Activated CD4-positive, alpha-beta T cell treated with anti-CD3 and anti-CD28 coated beads for 36 hours (primary cell): ENCODE measurements at regions of chr1 and their contacts with region 1.

Region 1: DNA sequence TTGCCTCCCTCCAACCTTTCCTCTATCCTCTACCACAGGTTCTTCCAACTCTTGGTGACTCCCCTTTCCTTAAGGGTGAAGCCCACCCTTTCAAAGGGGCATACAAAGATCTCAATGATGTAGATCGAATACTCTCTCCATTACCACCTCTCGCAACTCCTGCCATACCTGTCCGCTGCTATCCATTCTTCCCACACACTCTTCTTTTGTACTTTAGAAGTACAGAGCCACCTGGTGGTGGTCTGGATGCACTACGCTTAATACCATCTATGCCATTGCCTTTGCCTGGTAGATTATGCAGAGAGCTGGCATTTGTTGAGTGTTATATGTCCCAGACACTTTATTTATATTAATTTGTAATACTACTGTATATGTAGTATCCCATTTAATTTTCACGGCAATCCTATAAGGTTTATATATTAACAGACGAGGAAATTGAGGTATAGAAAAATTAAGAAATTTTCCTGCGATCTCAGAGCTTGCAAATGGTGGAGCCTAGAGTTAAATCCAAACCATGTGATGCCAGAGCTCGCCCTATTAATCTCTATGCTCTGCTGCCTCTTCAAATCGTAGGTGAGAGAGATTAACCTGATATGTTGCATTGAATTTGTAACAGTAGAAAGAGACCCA is 22.9 kb downstream of the TSHB start:
- DNase-seq: peak; percentile 70
- ATAC-seq: peak; percentile 80
- H3K4me3 Mint-ChIP-seq: no peak overlapping the region
- H3K27ac Mint-ChIP-seq: no peak overlapping the region
- H3K4me1 Mint-ChIP-seq: peaks cover 3% of the 10 kb centered on the region
- H3K27me3 Mint-ChIP-seq: no peaks in the 10 kb centered on the region

Region 2: DNA sequence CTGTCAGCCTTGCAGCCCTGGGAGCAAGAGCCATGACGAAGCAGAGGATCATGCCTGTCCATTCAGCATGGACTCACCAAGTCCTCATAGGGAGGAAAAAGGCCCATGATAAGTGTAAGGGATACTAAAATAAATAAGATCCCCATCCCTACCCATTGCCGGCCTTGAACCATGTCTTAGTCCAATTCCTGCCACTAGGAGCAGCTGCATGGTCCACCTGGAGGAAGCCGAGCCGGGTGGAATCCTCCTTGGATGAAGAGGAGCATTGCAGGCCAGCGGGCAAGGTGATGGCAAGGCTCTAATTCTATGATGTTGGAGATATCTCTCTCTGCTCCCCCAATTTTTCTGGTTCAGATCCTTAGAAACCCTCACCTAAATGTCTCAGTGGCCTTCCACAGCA is 860.2 kb before region 1 on chr1:
- CTCF ChIA-PET with region 1: no interaction called
- POLR2A ChIA-PET with region 1: no interaction called
- intact Hi-C with region 1: no loop called
- DNase-seq: no peak
- ATAC-seq: no peak
- H3K4me3 Mint-ChIP-seq: no peak overlapping the region
- H3K27ac Mint-ChIP-seq: no peak overlapping the region
- H3K4me1 Mint-ChIP-seq: peaks cover 3% of the 10 kb centered on the region
- H3K27me3 Mint-ChIP-seq: peaks cover 24% of the 10 kb centered on the region

Region 3: GRCh38 chr1:114716304-114717170 is 336.0 kb before region 1 on chr1 and contains the start of gene NRAS:
- CTCF ChIA-PET with region 1: no interaction called
- POLR2A ChIA-PET with region 1: no interaction called
- intact Hi-C with region 1: no loop called
- DNase-seq: peak; percentile 97
- ATAC-seq: peak; percentile 91
- H3K4me3 Mint-ChIP-seq: peak within 1 kb of the TSS; percentile 95
- H3K27ac Mint-ChIP-seq: peak within 1 kb of the TSS; percentile 97
- H3K4me1 Mint-ChIP-seq: peaks cover 30% of the 10 kb centered on the region
- H3K27me3 Mint-ChIP-seq: no peaks in the 10 kb centered on the region
- total RNA-seq, gene NRAS: 53.0 to 55.0 TPM

Region 4: GRCh38 chr1:114979278-114979891 is 73.2 kb before region 1 on chr1:
- CTCF ChIA-PET with region 1: interaction called, 7 read pairs
- POLR2A ChIA-PET with region 1: no interaction called
- intact Hi-C with region 1: loop called (anchors 1 kb)
- DNase-seq: peak; percentile 79
- ATAC-seq: no peak
- H3K4me3 Mint-ChIP-seq: no peak overlapping the region
- H3K27ac Mint-ChIP-seq: no peak overlapping the region
- H3K4me1 Mint-ChIP-seq: no peaks in the 10 kb centered on the region
- H3K27me3 Mint-ChIP-seq: peaks cover 9% of the 10 kb centered on the region

Region 5: DNA sequence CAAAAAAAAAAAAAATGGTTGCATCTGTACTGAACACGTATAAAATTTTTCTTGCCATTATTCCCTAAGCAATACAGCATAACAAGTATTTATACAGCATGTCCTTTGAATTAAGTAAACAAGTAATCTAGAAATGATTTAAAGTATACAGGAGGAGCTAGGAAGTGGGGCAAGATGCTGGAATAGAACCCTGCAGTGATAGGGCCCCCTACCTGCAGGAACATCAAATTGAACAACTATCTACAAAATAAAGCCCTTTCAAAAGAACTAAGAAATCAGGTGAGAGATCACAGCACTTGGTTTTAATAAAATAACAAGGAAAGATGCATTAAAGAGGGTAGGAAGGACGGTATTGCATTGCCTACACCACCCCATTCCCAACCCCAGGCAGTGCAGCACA is 12.1 kb before region 1 on chr1:
- CTCF ChIA-PET with region 1: interaction called, 15 read pairs
- POLR2A ChIA-PET with region 1: no interaction called
- intact Hi-C with region 1: no loop called
- DNase-seq: no peak
- ATAC-seq: no peak
- H3K4me3 Mint-ChIP-seq: no peak overlapping the region
- H3K27ac Mint-ChIP-seq: no peak overlapping the region
- H3K4me1 Mint-ChIP-seq: no peaks in the 10 kb centered on the region
- H3K27me3 Mint-ChIP-seq: no peaks in the 10 kb centered on the region

Region 6: DNA sequence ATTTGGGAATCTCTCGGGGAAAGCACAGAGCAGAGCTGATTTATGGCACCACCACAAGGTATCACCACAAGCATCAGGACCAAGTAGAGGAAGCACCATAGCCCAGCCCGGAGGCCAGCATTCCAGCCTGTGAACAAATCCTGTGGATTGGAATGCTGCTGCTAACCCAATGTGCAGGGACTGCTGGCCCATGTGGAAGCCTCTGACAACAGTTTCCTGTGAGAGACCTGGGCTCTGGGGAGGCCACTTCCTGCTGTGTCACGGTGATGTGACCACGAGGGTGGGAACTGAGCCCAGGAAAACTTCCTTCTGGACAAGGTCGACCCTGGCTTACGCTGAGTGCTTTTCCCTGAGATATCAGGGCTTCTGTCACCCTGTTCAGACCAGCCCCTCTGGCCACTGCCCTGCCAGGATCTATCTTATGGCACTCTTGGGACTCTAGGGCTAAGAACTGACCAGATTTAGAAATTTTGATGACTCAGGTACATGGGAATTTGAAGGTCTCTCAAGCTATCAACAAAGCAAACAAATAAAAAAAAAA is 373.7 kb after region 1 on chr1:
- CTCF ChIA-PET with region 1: no interaction called
- POLR2A ChIA-PET with region 1: no interaction called
- intact Hi-C with region 1: no loop called
- DNase-seq: no peak
- ATAC-seq: no peak
- H3K4me3 Mint-ChIP-seq: no peak overlapping the region
- H3K27ac Mint-ChIP-seq: no peak overlapping the region
- H3K4me1 Mint-ChIP-seq: peaks cover 6% of the 10 kb centered on the region
- H3K27me3 Mint-ChIP-seq: peaks cover 27% of the 10 kb centered on the region